PC-3 (cell line): ENCODE measurements at regions of chr1 and their contacts with region 1.

Region 1: GRCh38 chr1:25099343-25099951 is 132.9 kb downstream of the SYF2 start:
- DNase-seq: no peak
- ATAC-seq: no peak
- H3K4me3 ChIP-seq: no peak overlapping the region
- H3K27ac ChIP-seq: no peak overlapping the region
- H3K4me1 ChIP-seq: peaks cover 8% of the 10 kb centered on the region
- H3K27me3 ChIP-seq: no peaks in the 10 kb centered on the region
- CTCF ChIP-seq: no peak

Region 2: DNA sequence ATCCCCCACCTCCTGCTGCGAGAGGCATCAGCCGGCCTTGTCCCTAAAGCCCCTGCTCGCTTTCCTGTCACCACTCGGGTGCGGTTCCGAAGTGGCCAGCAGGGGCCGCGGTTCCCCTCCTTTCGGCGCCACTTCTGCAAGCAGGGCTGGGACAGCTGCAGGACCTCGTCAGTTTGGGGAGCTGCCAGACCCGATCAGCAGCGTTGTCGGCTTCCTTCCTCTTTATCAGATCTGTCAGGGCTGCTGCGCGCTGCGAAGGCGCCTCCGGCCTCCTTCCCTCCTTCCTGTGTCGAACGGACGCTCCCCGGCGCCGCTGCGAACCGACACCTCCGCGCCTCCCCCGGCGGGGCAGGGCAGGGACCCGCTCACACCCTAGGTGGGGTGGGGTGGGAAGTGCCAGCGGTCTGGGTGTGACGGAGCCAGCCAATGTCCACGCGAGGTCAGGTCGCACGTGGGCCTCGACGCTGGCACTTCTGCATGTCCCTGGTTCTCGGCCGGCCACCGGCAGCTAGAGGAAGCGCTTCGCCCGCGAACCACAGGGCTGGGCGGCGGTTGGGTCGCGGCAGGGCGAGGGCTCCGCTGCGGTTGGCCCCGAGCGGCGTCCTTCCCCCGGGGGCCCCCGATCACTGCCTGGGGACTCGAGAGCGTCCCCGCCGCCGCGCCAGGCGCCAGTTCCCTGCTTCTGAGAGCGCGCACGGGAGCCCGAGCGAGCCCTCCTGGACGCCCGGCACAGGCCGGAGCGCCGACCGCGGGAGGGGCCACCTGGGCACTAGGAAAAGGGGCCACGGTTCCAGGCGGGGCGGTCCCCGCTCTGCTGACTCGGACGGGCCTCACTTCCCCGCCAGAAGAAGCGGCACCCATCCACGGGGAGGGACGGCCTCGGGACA is 251.2 kb before region 1 on chr1:
- CTCF ChIA-PET with region 1: interaction called, 3 read pairs
- POLR2A ChIA-PET with region 1: no interaction called
- intact Hi-C with region 1: loop called (anchors 1 kb)
- DNase-seq: peak; percentile 90
- ATAC-seq: peak; percentile 89
- H3K4me3 ChIP-seq: peak overlapping the region; percentile 76
- H3K27ac ChIP-seq: no peak overlapping the region
- H3K4me1 ChIP-seq: no peaks in the 10 kb centered on the region; the same call in 1 of the 2 replicates
- H3K27me3 ChIP-seq: no peaks in the 10 kb centered on the region
- CTCF ChIP-seq: peak; percentile 90

Region 3: GRCh38 chr1:24932284-24932683 is 167.2 kb before region 1 on chr1:
- CTCF ChIA-PET with region 1: no interaction called
- POLR2A ChIA-PET with region 1: no interaction called
- intact Hi-C with region 1: loop called (anchors 1 kb)
- DNase-seq: peak; percentile 54
- ATAC-seq: peak; percentile 80
- H3K4me3 ChIP-seq: 0 out of 2 replicates have a peak overlapping the region, but pooled peaks have one; percentile 22
- H3K27ac ChIP-seq: no peak overlapping the region
- H3K4me1 ChIP-seq: no peaks in the 10 kb centered on the region
- H3K27me3 ChIP-seq: peaks cover 45% of the 10 kb centered on the region
- CTCF ChIP-seq: peak; percentile 42; the same call in 1 of the 2 replicates

Region 4: GRCh38 chr1:25022361-25023189 is 76.9 kb before region 1 on chr1:
- CTCF ChIA-PET with region 1: no interaction called
- POLR2A ChIA-PET with region 1: no interaction called
- intact Hi-C with region 1: no loop called
- DNase-seq: peak; percentile 64
- ATAC-seq: peak; percentile 79
- H3K4me3 ChIP-seq: no peak overlapping the region
- H3K27ac ChIP-seq: peak overlapping the region; percentile 61
- H3K4me1 ChIP-seq: peaks cover 10% of the 10 kb centered on the region
- H3K27me3 ChIP-seq: no peaks in the 10 kb centered on the region
- CTCF ChIP-seq: no peak

Region 5: GRCh38 chr1:25037174-25038074 is 62.0 kb before region 1 on chr1:
- CTCF ChIA-PET with region 1: no interaction called
- POLR2A ChIA-PET with region 1: no interaction called
- intact Hi-C with region 1: loop called (anchors 2 kb)
- DNase-seq: peak; percentile 68
- ATAC-seq: peak; percentile 48
- H3K4me3 ChIP-seq: no peak overlapping the region
- H3K27ac ChIP-seq: no peak overlapping the region
- H3K4me1 ChIP-seq: peaks cover 8% of the 10 kb centered on the region
- H3K27me3 ChIP-seq: 0 out of 2 replicates have a peak, but pooled peaks cover 14% of the 10 kb centered on the region
- CTCF ChIP-seq: peak; percentile 82